Activated naive CD4-positive, alpha-beta T cell treated with anti-CD3 and anti-CD28 coated beads for 36 hours (primary cell): ENCODE measurements at regions of chr1 and their contacts with region 1.

Region 1: DNA sequence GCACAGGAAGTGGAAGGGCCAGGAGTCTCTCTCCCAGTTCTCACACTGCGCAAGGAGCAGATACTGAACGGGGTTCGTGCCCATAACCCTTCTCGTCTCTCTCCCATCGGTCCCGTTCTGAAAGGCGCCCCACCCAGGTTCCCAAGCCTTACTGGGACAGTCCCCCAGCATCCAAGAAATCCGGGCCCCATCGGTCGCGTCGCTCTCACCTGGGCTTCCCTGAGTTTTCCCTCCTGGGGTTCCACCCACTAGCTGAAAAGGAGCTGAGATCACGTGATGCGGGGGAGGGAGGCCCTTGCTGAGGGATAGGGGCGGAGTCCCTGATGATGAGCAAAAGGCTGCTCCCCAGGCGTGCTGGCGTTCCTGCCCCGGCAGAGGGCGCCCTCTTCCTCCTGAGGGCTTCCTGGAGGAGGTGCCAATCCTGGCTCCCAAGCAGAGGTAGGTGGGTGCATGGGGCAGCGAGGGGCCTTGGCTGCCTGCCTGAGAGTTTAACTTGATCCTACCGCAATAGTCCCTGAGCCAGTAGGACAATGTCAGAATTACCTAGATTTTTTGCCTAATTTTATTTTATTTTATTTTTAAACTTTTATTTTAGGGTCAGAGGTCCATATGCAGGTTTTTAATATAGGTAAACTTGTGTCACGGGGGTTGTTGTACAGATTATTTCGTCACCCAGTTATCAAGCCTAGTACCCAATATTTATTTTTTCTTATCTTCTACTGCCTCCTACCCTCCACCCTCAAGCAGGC is at the start of gene SPOCD1:
- DNase-seq: peak; percentile 95
- H3K4me3 Mint-ChIP-seq: no peak within 1 kb of the TSS
- H3K27ac Mint-ChIP-seq: no peak within 1 kb of the TSS
- H3K4me1 Mint-ChIP-seq: peaks cover 10% of the 10 kb centered on the region
- H3K27me3 Mint-ChIP-seq: no peaks in the 10 kb centered on the region
- total RNA-seq, gene SPOCD1: 0.21 to 0.30 TPM

Region 2: DNA sequence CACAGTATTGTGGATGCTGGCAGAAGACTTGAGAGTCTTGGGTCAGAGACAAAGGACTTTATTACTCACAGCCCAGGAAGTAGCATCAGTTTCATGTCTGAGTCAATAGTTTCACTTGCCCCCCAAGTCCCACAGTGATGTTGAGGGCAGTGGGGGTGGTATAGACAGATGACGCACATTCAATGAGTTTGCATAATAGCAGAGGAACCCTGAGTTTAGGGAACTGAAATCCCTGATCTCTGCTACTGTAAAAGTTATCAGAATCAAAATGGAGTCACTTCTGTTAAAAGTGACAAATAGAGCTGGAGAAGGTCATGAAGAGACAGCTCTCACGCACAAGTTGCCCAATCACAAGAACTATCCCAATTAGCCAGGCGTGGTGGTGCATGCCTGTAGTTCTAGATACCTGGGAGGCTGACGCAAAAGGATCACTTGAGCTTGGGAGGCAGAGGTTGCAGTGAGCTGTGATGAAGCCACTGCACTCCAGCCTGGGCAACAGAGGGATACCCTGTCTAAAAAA is 210.0 kb before region 1 on chr1:
- CTCF ChIA-PET with region 1: no interaction called
- intact Hi-C with region 1: no loop called
- DNase-seq: peak; percentile 32
- H3K4me3 Mint-ChIP-seq: no peak overlapping the region
- H3K27ac Mint-ChIP-seq: no peak overlapping the region
- H3K4me1 Mint-ChIP-seq: peaks cover 8% of the 10 kb centered on the region
- H3K27me3 Mint-ChIP-seq: no peaks in the 10 kb centered on the region

Region 3: DNA sequence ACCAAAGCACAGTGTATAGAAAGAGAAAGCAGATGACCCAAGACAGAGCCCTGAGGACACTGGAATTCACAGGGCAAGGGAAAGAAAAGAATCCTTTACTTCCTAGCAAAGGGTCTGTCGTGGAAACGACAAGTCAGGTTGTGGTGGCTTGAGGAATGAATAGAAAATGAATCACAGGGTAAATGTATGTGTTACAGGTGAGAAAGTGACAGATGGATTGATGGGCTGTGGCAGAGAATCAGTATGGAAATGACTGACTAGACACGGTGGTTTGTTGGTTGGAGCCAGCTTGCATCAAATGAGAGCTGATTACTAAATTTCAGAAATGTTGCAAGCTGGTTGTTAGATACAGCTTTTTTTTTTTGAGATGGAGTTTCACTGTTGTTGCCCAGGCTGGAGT is 75.4 kb after region 1 on chr1:
- CTCF ChIA-PET with region 1: interaction called, 5 read pairs
- intact Hi-C with region 1: loop called (anchors 1 kb)
- DNase-seq: peak; percentile 81
- H3K4me3 Mint-ChIP-seq: no peak overlapping the region
- H3K27ac Mint-ChIP-seq: peak overlapping the region; percentile 90
- H3K4me1 Mint-ChIP-seq: peaks cover 38% of the 10 kb centered on the region
- H3K27me3 Mint-ChIP-seq: no peaks in the 10 kb centered on the region

Region 4: GRCh38 chr1:31961536-31961935 is 145.6 kb after region 1 on chr1:
- CTCF ChIA-PET with region 1: interaction called, 65 read pairs
- intact Hi-C with region 1: loop called (anchors 1 kb)
- DNase-seq: no peak
- H3K4me3 Mint-ChIP-seq: peak overlapping the region; percentile 23
- H3K27ac Mint-ChIP-seq: peak overlapping the region; percentile 76
- H3K4me1 Mint-ChIP-seq: peaks cover 61% of the 10 kb centered on the region
- H3K27me3 Mint-ChIP-seq: no peaks in the 10 kb centered on the region

Region 5: DNA sequence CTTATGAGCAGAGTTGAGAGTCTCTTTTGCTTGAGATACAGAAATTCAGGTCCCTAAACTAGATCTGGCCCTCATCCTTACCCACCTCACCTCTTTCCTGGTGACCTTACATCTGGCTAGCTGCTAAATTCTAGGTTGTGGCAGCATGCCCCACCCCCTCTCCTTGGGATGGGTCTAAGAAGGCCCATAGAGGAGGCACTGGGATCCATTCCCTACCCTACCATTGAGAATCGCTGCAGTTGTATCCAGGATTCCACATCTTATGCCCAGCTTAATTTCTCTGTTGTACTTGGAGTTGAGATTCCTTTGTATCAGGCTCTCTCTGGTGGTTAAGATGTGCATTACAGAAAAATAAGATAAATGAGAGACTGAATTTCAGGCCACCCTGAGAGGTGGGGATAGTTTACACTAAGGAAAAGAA is 247.3 kb after region 1 on chr1:
- CTCF ChIA-PET with region 1: interaction called, 4 read pairs
- intact Hi-C with region 1: loop called (anchors 5 kb)
- DNase-seq: no peak
- H3K4me3 Mint-ChIP-seq: no peak overlapping the region
- H3K27ac Mint-ChIP-seq: peak overlapping the region; percentile 80
- H3K4me1 Mint-ChIP-seq: peaks cover 9% of the 10 kb centered on the region
- H3K27me3 Mint-ChIP-seq: no peaks in the 10 kb centered on the region

Region 6: DNA sequence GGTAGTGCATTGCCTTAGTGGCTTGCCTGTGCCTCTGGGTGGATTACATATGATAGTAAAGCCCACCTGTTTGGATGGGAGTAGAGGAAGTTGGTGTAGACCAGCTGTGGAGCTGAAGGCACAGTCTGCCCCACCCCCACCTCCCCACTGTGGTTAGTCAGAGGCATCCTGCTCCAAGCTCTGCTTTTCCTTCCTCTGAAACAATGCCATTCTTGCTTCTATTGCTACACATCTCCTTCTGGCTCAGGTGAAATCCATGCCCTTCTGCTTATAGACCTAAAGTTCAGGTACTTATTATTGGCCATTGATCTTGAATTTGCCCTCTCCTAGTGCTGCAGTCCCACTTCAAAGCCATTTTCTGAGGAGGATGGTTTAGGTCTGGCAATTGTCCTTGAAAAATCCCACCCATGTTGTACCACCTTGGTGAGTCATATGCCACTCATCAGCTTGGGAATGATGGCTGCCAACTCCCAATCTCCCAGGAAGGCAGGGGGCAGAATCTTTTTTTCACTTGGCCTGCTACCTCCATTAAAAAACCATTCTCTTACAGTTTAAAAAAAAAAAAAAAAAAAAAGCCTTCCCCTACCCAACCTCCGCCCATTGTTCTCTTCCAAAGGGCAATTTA is 356.8 kb after region 1 on chr1:
- CTCF ChIA-PET with region 1: no interaction called
- intact Hi-C with region 1: no loop called
- DNase-seq: no peak
- H3K4me3 Mint-ChIP-seq: no peak overlapping the region
- H3K27ac Mint-ChIP-seq: no peak overlapping the region
- H3K4me1 Mint-ChIP-seq: peaks cover 16% of the 10 kb centered on the region
- H3K27me3 Mint-ChIP-seq: no peaks in the 10 kb centered on the region